Heart right ventricle (tissue), 16 donors: ENCODE measurements at regions of chrX and their contacts with region 1.

Region 1: GRCh38 chrX:71128915-71129765 is 10.7 kb downstream of the MED12 start:
- DNase-seq: peak; percentile 44 to 56
- ATAC-seq: peak; percentile 56 to 88 (median 80)
- H3K4me3 ChIP-seq: no peak overlapping the region
- H3K27ac ChIP-seq: no peak overlapping the region
- H3K4me1 ChIP-seq: peaks cover 0 to 7% (median 0%) of the 10 kb centered on the region in 9 donors
- H3K27me3 ChIP-seq: no peaks in the 10 kb centered on the region
- CTCF ChIP-seq: peak; percentile 42 to 77 (median 70)

Region 2: GRCh38 chrX:71053217-71053621 is 75.9 kb before region 1 on chrX:
- intact Hi-C with region 1: no loop called
- DNase-seq: peak in 1 of 2 donors; percentile 28
- ATAC-seq: peak; percentile 67 to 91 (median 80)
- H3K4me3 ChIP-seq: peak overlapping the region in 9 of 10 donors; percentile 7 to 45 (median 38)
- H3K27ac ChIP-seq: peak overlapping the region in 2 of 10 donors; percentile 27 to 44
- H3K4me1 ChIP-seq: peaks cover 0 to 23% (median 0%) of the 10 kb centered on the region in 9 donors
- H3K27me3 ChIP-seq: peaks cover 0 to 4% (median 0%) of the 10 kb centered on the region in 7 donors
- CTCF ChIP-seq: no peak

Region 3: DNA sequence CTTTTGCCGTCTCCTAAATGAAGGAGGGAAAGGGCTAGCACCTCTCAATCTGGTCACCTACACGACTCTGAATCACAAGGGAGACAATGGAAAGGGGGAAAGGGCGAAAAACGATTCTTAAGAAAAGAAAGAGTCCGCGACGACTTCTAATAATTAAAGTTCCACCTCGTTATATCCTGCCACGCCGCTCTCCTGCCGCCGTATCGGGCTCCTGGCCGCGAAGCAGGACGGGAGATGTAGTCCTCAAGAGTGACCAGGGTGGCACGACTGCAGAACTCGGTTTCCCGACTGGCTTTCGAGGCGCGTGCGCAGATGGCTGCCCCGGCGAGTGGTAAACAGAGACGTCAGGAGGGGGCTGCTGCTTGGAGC is 33.6 kb before region 1 on chrX and contains the start of gene FOXO4:
- intact Hi-C with region 1: loop called in 3 of 10 experiments (anchors 1 to 5 kb)
- DNase-seq: peak; percentile 90 to 92
- ATAC-seq: peak; percentile 94 to 97 (median 96)
- H3K4me3 ChIP-seq: peak within 1 kb of the TSS; percentile 41 to 67 (median 62)
- H3K27ac ChIP-seq: peak within 1 kb of the TSS in 9 of 10 donors; percentile 6 to 77 (median 48)
- H3K4me1 ChIP-seq: peaks cover 0 to 20% (median 9%) of the 10 kb centered on the region in 9 donors
- H3K27me3 ChIP-seq: peaks cover 0 to 33% (median 0%) of the 10 kb centered on the region in 7 donors
- CTCF ChIP-seq: no peak
- total RNA-seq, gene FOXO4: 29.5 to 67.8 (median 37.5) TPM